Activated CD4-positive, alpha-beta T cell treated with anti-CD3 and anti-CD28 coated beads for 36 hours (primary cell): ENCODE measurements at regions of chr5 and their contacts with region 1.

Region 1: GRCh38 chr5:56951946-56952691 is at the start of gene MIER3:
- DNase-seq: peak; percentile 90
- ATAC-seq: peak; percentile 95
- H3K4me3 Mint-ChIP-seq: peak within 1 kb of the TSS; percentile 85
- H3K27ac Mint-ChIP-seq: peak within 1 kb of the TSS; percentile 81
- H3K4me1 Mint-ChIP-seq: peaks cover 20% of the 10 kb centered on the region
- H3K27me3 Mint-ChIP-seq: peaks cover 16% of the 10 kb centered on the region
- total RNA-seq, gene MIER3: 15.4 to 16.0 TPM

Region 2: GRCh38 chr5:56909294-56910209 is 42.6 kb before region 1 on chr5 and contains the start of gene SETD9:
- CTCF ChIA-PET with region 1: interaction called, 8 read pairs
- POLR2A ChIA-PET with region 1: interaction called, 3 read pairs
- intact Hi-C with region 1: loop called (anchors 1 kb)
- DNase-seq: peak; percentile 97
- ATAC-seq: peak; percentile 92
- H3K4me3 Mint-ChIP-seq: peak within 1 kb of the TSS; percentile 90
- H3K27ac Mint-ChIP-seq: peak within 1 kb of the TSS; percentile 94
- H3K4me1 Mint-ChIP-seq: peaks cover 20% of the 10 kb centered on the region
- H3K27me3 Mint-ChIP-seq: peaks cover 5% of the 10 kb centered on the region
- total RNA-seq, gene SETD9: 5.4 to 6.8 TPM

Region 3: GRCh38 chr5:56962286-56962685 is 10.2 kb after region 1 on chr5:
- CTCF ChIA-PET with region 1: interaction called, 10 read pairs
- POLR2A ChIA-PET with region 1: no interaction called
- intact Hi-C with region 1: no loop called
- DNase-seq: no peak
- ATAC-seq: no peak
- H3K4me3 Mint-ChIP-seq: no peak overlapping the region
- H3K27ac Mint-ChIP-seq: no peak overlapping the region
- H3K4me1 Mint-ChIP-seq: no peaks in the 10 kb centered on the region
- H3K27me3 Mint-ChIP-seq: peaks cover 28% of the 10 kb centered on the region

Region 4: DNA sequence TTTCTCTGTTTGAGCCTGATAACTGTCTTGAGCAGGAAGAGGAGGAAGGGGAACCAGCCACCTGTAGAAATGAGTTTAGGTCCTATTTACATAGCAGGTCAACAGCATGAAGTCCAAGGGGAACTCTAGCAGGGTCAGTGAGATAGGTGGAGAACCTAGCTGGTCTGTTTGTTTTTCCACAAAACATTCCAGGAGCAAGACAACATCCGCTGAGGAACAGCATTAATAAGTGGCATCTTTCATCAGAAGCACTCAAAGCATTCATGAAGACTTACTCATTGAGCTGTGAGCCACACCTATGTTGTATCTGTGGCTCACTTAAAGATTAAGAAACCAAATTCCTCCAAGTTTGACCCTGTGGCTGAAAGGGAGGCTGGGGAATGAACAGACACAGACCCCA is 414.6 kb after region 1 on chr5:
- CTCF ChIA-PET with region 1: no interaction called
- POLR2A ChIA-PET with region 1: no interaction called
- intact Hi-C with region 1: no loop called
- DNase-seq: no peak
- ATAC-seq: no peak
- H3K4me3 Mint-ChIP-seq: no peak overlapping the region
- H3K27ac Mint-ChIP-seq: no peak overlapping the region
- H3K4me1 Mint-ChIP-seq: no peaks in the 10 kb centered on the region
- H3K27me3 Mint-ChIP-seq: peaks cover 4% of the 10 kb centered on the region